ENCODE measurements at regions of chr4 and their contacts with region 1.

Region 1: GRCh38 chr4:139083956-139084803 is 68.6 kb downstream of the NOCT start:
- DNase-seq: peak; percentile 81
- H3K4me3 Mint-ChIP-seq: peak overlapping the region; percentile 99
- H3K27ac Mint-ChIP-seq: peak overlapping the region; percentile 99
- H3K4me1 Mint-ChIP-seq: peaks cover 30% of the 10 kb centered on the region
- H3K27me3 Mint-ChIP-seq: no peaks in the 10 kb centered on the region

Region 2: GRCh38 chr4:138789796-138790195 is 294.4 kb before region 1 on chr4:
- intact Hi-C with region 1: no loop called
- DNase-seq: no peak
- H3K4me3 Mint-ChIP-seq: no peak overlapping the region
- H3K27ac Mint-ChIP-seq: no peak overlapping the region
- H3K4me1 Mint-ChIP-seq: no peaks in the 10 kb centered on the region
- H3K27me3 Mint-ChIP-seq: peaks cover 2% of the 10 kb centered on the region

Region 3: DNA sequence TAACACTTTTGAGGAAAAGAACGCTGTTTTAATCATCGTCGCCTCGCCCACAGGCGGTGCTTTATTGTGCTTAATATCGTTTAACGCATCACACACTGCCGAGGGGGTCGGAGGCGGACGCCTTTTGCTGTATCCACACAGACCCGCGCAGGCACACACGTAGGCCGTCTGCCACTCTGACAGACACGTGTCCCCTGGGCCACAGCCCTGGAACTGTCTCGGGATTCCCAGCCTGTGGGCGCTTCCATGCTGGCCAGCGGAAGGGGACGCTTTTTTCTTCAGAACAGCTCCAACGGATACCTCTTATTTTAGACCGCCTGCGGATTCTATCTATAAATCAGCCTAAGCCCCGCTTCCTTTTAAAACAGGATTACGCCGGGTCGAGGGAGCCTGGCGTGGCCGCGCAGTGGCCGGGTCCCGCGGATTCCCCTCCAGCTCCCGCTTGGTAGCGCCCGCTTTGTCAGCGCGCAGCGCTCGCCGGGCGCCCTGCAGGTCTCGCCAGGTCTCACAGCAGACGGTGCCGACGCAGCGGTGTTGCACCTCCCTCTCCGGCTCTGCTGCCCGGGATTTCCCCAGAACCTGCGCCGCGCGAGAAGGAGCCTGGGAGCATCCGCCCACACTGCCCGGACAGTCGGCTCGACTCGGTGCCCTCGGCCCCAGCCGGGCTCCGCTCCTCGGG is 68.8 kb before region 1 on chr4 and contains the start of gene NOCT:
- intact Hi-C with region 1: loop called (anchors 1 kb)
- DNase-seq: peak; percentile 89
- H3K4me3 Mint-ChIP-seq: peak within 1 kb of the TSS; percentile 89
- H3K27ac Mint-ChIP-seq: peak within 1 kb of the TSS; percentile 93
- H3K4me1 Mint-ChIP-seq: peaks cover 41% of the 10 kb centered on the region
- H3K27me3 Mint-ChIP-seq: no peaks in the 10 kb centered on the region
- total RNA-seq, gene NOCT: 20.3 and 22.1 TPM in 2 replicates

Region 4: DNA sequence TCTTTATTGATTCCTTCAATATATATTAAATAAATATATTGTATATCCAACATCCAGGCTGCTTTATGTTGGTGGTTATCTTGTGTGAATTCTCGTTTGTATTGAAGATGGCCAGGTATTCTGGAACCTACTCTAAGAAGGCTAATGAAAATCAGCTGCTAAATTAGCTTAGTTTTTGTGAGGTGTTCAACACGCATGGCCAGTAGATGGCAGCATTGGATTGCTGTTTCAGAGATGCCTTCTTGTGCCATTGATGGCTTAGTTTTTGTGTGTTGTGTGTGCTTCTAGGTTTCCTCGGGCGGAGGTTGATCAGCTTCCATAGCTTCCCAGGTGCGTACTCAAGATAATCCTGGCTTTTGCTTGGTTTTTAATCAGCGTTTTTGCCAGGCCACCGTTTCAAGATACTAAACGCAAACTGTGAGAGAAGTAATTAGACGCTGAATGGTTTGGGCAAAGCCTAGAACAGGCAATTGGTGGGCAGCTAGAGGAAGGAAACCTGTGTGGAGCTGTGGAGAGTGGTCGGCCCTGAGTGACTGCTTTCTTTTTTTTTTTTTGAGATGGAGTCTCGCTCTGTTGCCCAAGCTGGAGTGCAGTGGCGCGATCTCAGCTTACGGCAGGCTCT is 53.5 kb before region 1 on chr4:
- intact Hi-C with region 1: loop called (anchors 1 kb)
- DNase-seq: peak; percentile 58
- H3K4me3 Mint-ChIP-seq: no peak overlapping the region
- H3K27ac Mint-ChIP-seq: no peak overlapping the region
- H3K4me1 Mint-ChIP-seq: peaks cover 16% of the 10 kb centered on the region
- H3K27me3 Mint-ChIP-seq: no peaks in the 10 kb centered on the region

Region 5: GRCh38 chr4:139042981-139043460 is 41.2 kb before region 1 on chr4:
- intact Hi-C with region 1: no loop called
- DNase-seq: no peak
- H3K4me3 Mint-ChIP-seq: no peak overlapping the region
- H3K27ac Mint-ChIP-seq: no peak overlapping the region
- H3K4me1 Mint-ChIP-seq: peaks cover 7% of the 10 kb centered on the region
- H3K27me3 Mint-ChIP-seq: no peaks in the 10 kb centered on the region

Region 6: GRCh38 chr4:139301113-139301820 is 217.1 kb after region 1 on chr4 and contains the start of gene NAA15:
- intact Hi-C with region 1: loop called (anchors 1 kb)
- DNase-seq: peak; percentile 98
- H3K4me3 Mint-ChIP-seq: peak within 1 kb of the TSS; percentile 98
- H3K27ac Mint-ChIP-seq: peak within 1 kb of the TSS; percentile 99
- H3K4me1 Mint-ChIP-seq: peaks cover 48% of the 10 kb centered on the region
- H3K27me3 Mint-ChIP-seq: no peaks in the 10 kb centered on the region
- total RNA-seq, gene NAA15: 86.7 and 97.4 TPM in 2 replicates

Region 7: GRCh38 chr4:139554893-139555704 is 470.9 kb after region 1 on chr4:
- intact Hi-C with region 1: loop called (anchors 1 kb)
- DNase-seq: peak; percentile 82
- H3K4me3 Mint-ChIP-seq: peak overlapping the region; percentile 97
- H3K27ac Mint-ChIP-seq: peak overlapping the region; percentile 98
- H3K4me1 Mint-ChIP-seq: peaks cover 47% of the 10 kb centered on the region
- H3K27me3 Mint-ChIP-seq: peaks cover 4% of the 10 kb centered on the region

Measured in activated T-helper 2 cell treated with anti-CD3 and anti-CD28 coated beads, Interferon-gamma antibody, Interleukin-2, Interleukin-4, amounts not matched to agents 10 μg/mL and 5 μg/mL and 100 μg/mL, durations not matched to agents 14 hours and 24 hours and 36 hours (primary cell).